ENCODE measurements at regions of chr19 and their contacts with region 1.

Region 1: GRCh38 chr19:48618916-48619691 is at the starts of genes RPL18 and SPHK2:
- DNase-seq: peak; percentile 98 to 99
- ATAC-seq: peak; percentile 86 to 93
- H3K4me3 ChIP-seq: peak within 1 kb of the TSS; percentile 66 to 96 (median 79)
- H3K27ac ChIP-seq: peak within 1 kb of the TSS; percentile 92 to 99 (median 96)
- H3K4me1 ChIP-seq: peaks cover 33 to 48% of the 10 kb centered on the region in 2 donors
- H3K27me3 ChIP-seq: no peaks in the 10 kb centered on the region
- CTCF ChIP-seq: peak in 1 of 5 experiments; percentile 13
- POLR2A ChIP-seq: peak; percentile 94 to 95
- total RNA-seq, gene RPL18: 1,223 to 1,420 (median 1,299) TPM
- total RNA-seq, gene SPHK2: 7.8 to 12.4 (median 9.2) TPM

Region 2: GRCh38 chr19:48363810-48364563 is 255.1 kb before region 1 on chr19 and contains the starts of genes SYNGR4 and TMEM143:
- in situ Hi-C with region 1: no loop called
- intact Hi-C with region 1: no loop called
- DNase-seq: peak; percentile 98 to 99
- ATAC-seq: peak; percentile 94 to 97
- H3K4me3 ChIP-seq: peak within 1 kb of the TSS; percentile 75 to 99 (median 84)
- H3K27ac ChIP-seq: peak within 1 kb of the TSS; percentile 97 to 100 (median 99)
- H3K4me1 ChIP-seq: peaks cover 4 to 10% of the 10 kb centered on the region in 2 donors
- H3K27me3 ChIP-seq: no peaks in the 10 kb centered on the region
- CTCF ChIP-seq: no peak
- POLR2A ChIP-seq: peak in 1 of 2 donors; percentile 35
- total RNA-seq, gene SYNGR4: not detected
- total RNA-seq, gene TMEM143: 28.8 to 42.3 (median 40.7) TPM

Region 3: GRCh38 chr19:48524728-48525127 is 94.4 kb before region 1 on chr19:
- in situ Hi-C with region 1: no loop called
- intact Hi-C with region 1: no loop called
- DNase-seq: no peak
- ATAC-seq: no peak
- H3K4me3 ChIP-seq: peak overlapping the region in 1 of 4 donors; percentile 17
- H3K27ac ChIP-seq: no peak overlapping the region
- H3K4me1 ChIP-seq: no peaks in the 10 kb centered on the region
- H3K27me3 ChIP-seq: no peaks in the 10 kb centered on the region
- CTCF ChIP-seq: no peak
- POLR2A ChIP-seq: no peak

Region 4: GRCh38 chr19:48568345-48568886 is 50.7 kb before region 1 on chr19:
- in situ Hi-C with region 1: no loop called
- intact Hi-C with region 1: loop called (anchors 2 kb)
- DNase-seq: peak; percentile 92 to 96
- ATAC-seq: peak; percentile 90 to 92
- H3K4me3 ChIP-seq: peak overlapping the region in 1 of 4 donors; percentile 27
- H3K27ac ChIP-seq: peak overlapping the region; percentile 81 to 92 (median 88)
- H3K4me1 ChIP-seq: peaks cover 11 to 16% of the 10 kb centered on the region in 2 donors
- H3K27me3 ChIP-seq: no peaks in the 10 kb centered on the region
- CTCF ChIP-seq: no peak
- POLR2A ChIP-seq: peak; percentile 11 to 32

Region 5: GRCh38 chr19:48637170-48637947 is 18.3 kb after region 1 on chr19 and contains the start of gene DBP:
- in situ Hi-C with region 1: no loop called
- intact Hi-C with region 1: loop called (anchors 2 kb)
- DNase-seq: peak; percentile 99 to 100
- ATAC-seq: peak; percentile 52 to 55
- H3K4me3 ChIP-seq: peak within 1 kb of the TSS; percentile 58 to 95 (median 76)
- H3K27ac ChIP-seq: peak within 1 kb of the TSS; percentile 97 to 100 (median 100)
- H3K4me1 ChIP-seq: peaks cover 37 to 46% of the 10 kb centered on the region in 2 donors
- H3K27me3 ChIP-seq: no peaks in the 10 kb centered on the region
- CTCF ChIP-seq: peak in 1 of 5 experiments; percentile 21
- POLR2A ChIP-seq: peak; percentile 59 to 76
- total RNA-seq, gene DBP: 1.7 to 12.9 (median 4.4) TPM

Region 6: GRCh38 chr19:48660854-48661731 is 42.0 kb after region 1 on chr19:
- in situ Hi-C with region 1: no loop called
- intact Hi-C with region 1: no loop called
- DNase-seq: peak; percentile 66 to 71
- ATAC-seq: peak; percentile 96
- H3K4me3 ChIP-seq: no peak overlapping the region
- H3K27ac ChIP-seq: peak overlapping the region in 3 of 4 donors; percentile 40 to 63 (median 47)
- H3K4me1 ChIP-seq: no peaks in the 10 kb centered on the region
- H3K27me3 ChIP-seq: no peaks in the 10 kb centered on the region
- CTCF ChIP-seq: no peak
- POLR2A ChIP-seq: no peak

Region 7: GRCh38 chr19:48819366-48819816 is 200.3 kb after region 1 on chr19:
- in situ Hi-C with region 1: no loop called
- intact Hi-C with region 1: no loop called
- DNase-seq: peak; percentile 93 to 99
- ATAC-seq: peak; percentile 88
- H3K4me3 ChIP-seq: no peak overlapping the region
- H3K27ac ChIP-seq: peak overlapping the region; percentile 93 to 95 (median 93)
- H3K4me1 ChIP-seq: peaks cover 32 to 38% of the 10 kb centered on the region in 2 donors
- H3K27me3 ChIP-seq: no peaks in the 10 kb centered on the region
- CTCF ChIP-seq: no peak
- POLR2A ChIP-seq: peak in 1 of 2 donors; percentile 16

Measured in gastrocnemius medialis (tissue), 4 donors.